Activated naive CD4-positive, alpha-beta T cell treated with anti-CD3 and anti-CD28 coated beads for 36 hours (primary cell): ENCODE measurements at regions of chr11 and their contacts with region 1.

Region 1: GRCh38 chr11:47715082-47715669 is at the start of gene AGBL2:
- DNase-seq: peak; percentile 87
- H3K4me3 Mint-ChIP-seq: peak within 1 kb of the TSS; percentile 91
- H3K27ac Mint-ChIP-seq: peak within 1 kb of the TSS; percentile 94
- H3K4me1 Mint-ChIP-seq: peaks cover 16% of the 10 kb centered on the region
- H3K27me3 Mint-ChIP-seq: no peaks in the 10 kb centered on the region
- total RNA-seq, gene AGBL2: 1.3 to 2.2 TPM

Region 2: DNA sequence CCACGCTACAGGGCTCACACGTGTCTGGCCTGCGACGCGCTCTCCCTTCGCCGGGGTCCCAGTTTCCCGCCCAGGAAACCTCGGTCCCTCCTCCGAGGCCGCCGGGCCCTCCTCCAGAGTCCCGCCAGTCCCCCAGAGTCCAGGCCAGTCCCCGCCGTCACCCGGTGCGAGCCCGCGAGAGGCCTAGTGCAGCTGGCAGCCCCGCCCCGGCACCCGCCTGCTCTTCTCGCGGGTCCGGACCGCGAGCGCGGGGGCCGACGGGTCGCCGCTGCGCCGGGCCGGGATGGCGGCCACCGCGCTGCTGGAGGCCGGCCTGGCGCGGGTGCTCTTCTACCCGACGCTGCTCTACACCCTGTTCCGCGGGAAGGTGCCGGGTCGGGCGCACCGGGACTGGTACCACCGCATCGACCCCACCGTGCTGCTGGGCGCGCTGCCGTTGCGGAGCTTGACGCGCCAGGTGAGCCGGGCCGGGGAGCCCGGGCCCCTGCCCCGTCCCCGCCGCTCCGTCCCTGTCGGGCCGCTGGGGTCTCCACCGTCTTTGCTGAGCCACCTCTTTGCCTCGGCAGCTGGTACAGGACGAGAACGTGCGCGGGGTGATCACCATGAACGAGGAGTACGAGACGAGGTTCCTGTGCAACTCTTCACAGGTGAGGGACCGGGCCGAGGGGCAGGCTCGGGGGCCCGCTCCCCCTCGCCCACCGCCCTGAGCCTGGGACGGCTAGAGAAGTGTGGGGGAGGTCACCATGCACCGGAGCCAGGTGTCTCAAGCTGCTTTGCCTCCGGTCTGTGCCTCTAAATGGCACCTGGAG is 149.6 kb before region 1 on chr11 and contains the start of gene PTPMT1:
- CTCF ChIA-PET with region 1: no interaction called
- intact Hi-C with region 1: loop called (anchors 1 kb)
- DNase-seq: peak; percentile 82
- H3K4me3 Mint-ChIP-seq: peak within 1 kb of the TSS; percentile 83
- H3K27ac Mint-ChIP-seq: peak within 1 kb of the TSS; percentile 75
- H3K4me1 Mint-ChIP-seq: peaks cover 26% of the 10 kb centered on the region
- H3K27me3 Mint-ChIP-seq: no peaks in the 10 kb centered on the region
- total RNA-seq, gene PTPMT1: 46.9 to 49.2 TPM

Region 3: DNA sequence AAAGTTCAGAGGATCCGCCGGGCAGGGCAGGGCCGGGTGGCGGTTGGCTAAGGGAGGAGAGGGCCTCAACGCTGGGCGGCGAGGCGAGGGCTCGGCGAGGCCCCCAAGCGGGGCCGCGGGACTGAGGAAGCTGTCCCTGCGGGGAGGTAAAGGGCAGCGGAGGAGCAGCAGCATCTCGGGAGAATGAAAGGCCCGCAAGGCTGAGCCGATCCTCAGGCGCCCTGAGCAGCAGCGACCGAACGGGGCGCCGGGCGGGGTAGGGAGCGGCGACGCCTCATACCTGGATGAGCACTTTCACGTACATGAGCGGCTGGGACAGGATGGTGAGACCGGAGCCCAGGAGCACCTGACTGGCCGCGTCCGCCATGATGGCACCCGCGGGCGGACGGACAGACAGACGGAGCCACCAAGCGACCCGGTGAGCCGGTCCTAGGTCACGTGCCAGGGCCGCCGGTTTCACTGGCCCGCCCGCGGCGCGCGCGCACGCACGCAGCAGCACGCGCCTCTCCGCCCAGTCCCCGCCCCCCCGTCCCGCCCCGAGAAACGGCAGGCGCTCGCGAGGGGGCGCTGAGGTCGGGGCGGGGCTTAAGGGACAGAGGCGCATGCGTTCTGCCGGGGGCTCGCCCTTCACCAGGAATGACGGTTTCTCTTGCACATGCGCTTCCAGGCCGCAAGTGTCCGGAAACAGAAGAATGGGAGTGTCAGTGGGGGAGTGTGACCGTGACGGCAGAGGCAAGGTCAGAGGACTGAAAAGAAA is 72.9 kb before region 1 on chr11 and contains the start of gene MTCH2:
- CTCF ChIA-PET with region 1: no interaction called
- intact Hi-C with region 1: loop called (anchors 1 kb)
- DNase-seq: peak; percentile 97
- H3K4me3 Mint-ChIP-seq: peak within 1 kb of the TSS; percentile 91
- H3K27ac Mint-ChIP-seq: peak within 1 kb of the TSS; percentile 81
- H3K4me1 Mint-ChIP-seq: peaks cover 19% of the 10 kb centered on the region
- H3K27me3 Mint-ChIP-seq: no peaks in the 10 kb centered on the region
- total RNA-seq, gene MTCH2: 93.7 to 95.1 TPM